ENCODE measurements at regions of chr17 and their contacts with region 1.

Region 1: GRCh38 chr17:44400226-44400847 is 10.9 kb upstream of the ITGA2B start:
- DNase-seq: no peak
- H3K4me3 Mint-ChIP-seq: no peak overlapping the region
- H3K27ac Mint-ChIP-seq: no peak overlapping the region
- H3K4me1 Mint-ChIP-seq: peaks cover 10% of the 10 kb centered on the region
- H3K27me3 Mint-ChIP-seq: no peaks in the 10 kb centered on the region

Region 2: GRCh38 chr17:44424828-44425461 is 24.6 kb after region 1 on chr17:
- intact Hi-C with region 1: loop called (anchors 2 kb)
- DNase-seq: no peak
- H3K4me3 Mint-ChIP-seq: peak overlapping the region; percentile 40
- H3K27ac Mint-ChIP-seq: peak overlapping the region; percentile 79
- H3K4me1 Mint-ChIP-seq: peaks cover 30% of the 10 kb centered on the region
- H3K27me3 Mint-ChIP-seq: no peaks in the 10 kb centered on the region

Region 3: DNA sequence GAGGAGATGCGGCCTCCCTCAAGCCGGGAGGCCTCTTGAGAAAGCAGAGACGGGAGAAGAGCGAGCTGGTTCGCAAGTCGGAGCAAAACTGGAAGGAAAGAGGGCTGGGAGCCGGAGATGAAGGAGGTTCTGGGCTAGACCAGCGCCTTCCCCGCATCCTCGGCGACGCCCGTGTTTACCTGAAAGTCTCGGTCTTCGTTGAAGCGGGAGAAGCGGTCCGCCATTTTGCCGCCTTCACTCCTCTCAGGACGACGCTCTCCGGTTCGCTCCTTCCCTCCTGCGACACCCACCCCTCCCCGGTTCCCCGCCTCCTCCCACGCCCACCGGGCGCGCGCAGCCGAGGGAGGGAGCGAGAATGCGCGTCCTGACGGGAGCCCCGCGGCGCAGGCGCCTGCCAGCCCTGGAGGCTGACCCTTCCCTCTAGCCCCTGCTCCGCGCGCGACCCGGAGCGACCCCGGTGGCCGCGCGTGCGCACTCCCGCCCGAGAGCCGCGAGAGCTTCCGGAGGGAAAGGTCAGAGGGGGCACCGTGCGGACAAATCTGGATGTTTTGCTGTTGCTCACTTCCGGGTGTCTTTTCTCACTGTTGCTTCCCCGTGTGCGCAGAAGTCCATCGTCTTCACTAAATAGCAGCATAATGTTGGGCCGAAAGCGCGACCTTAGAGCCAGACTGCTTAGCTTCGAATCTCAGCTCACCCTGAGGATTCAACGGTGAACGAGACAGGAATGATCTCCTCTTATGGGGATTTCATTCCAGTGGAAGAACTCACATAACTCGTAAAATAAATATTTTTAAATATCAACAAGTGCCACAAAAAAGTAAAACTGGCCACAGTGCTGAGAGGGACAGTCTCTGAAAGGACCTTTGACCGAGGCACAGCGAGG is 103.1 kb after region 1 on chr17 and contains the start of gene GPATCH8:
- intact Hi-C with region 1: loop called (anchors 5 kb)
- DNase-seq: peak; percentile 95
- H3K4me3 Mint-ChIP-seq: peak within 1 kb of the TSS; percentile 99
- H3K27ac Mint-ChIP-seq: peak within 1 kb of the TSS; percentile 97
- H3K4me1 Mint-ChIP-seq: peaks cover 17% of the 10 kb centered on the region
- H3K27me3 Mint-ChIP-seq: no peaks in the 10 kb centered on the region
- total RNA-seq, gene GPATCH8: 44.7 and 49.6 TPM in 2 replicates

Region 4: GRCh38 chr17:44522883-44523671 is 122.7 kb after region 1 on chr17:
- intact Hi-C with region 1: loop called (anchors 1 kb)
- DNase-seq: peak; percentile 55
- H3K4me3 Mint-ChIP-seq: no peak overlapping the region
- H3K27ac Mint-ChIP-seq: no peak overlapping the region
- H3K4me1 Mint-ChIP-seq: peaks cover 3% of the 10 kb centered on the region
- H3K27me3 Mint-ChIP-seq: peaks cover 16% of the 10 kb centered on the region

Measured in activated T-helper 2 cell treated with anti-CD3 and anti-CD28 coated beads, Interferon-gamma antibody, Interleukin-2, Interleukin-4, amounts not matched to agents 10 μg/mL and 5 μg/mL and 100 μg/mL, durations not matched to agents 14 hours and 24 hours and 36 hours (primary cell).